Lower leg skin (tissue), 4 donors: ENCODE measurements at regions of chr14 and their contacts with region 1.

Region 1: GRCh38 chr14:54610051-54610977 is 43.4 kb downstream of the SAMD4A start:
- DNase-seq: no peak
- H3K4me3 ChIP-seq: no peak overlapping the region
- CTCF ChIP-seq: no peak
- POLR2A ChIP-seq: no peak

Region 2: GRCh38 chr14:54627540-54628363 is 17.4 kb after region 1 on chr14:
- intact Hi-C with region 1: no loop called
- DNase-seq: no peak
- H3K4me3 ChIP-seq: no peak overlapping the region
- CTCF ChIP-seq: no peak
- POLR2A ChIP-seq: no peak

Region 3: GRCh38 chr14:54654605-54655004 is 44.3 kb after region 1 on chr14:
- intact Hi-C with region 1: loop called (anchors 1 kb)
- DNase-seq: no peak
- H3K4me3 ChIP-seq: no peak overlapping the region
- CTCF ChIP-seq: no peak
- POLR2A ChIP-seq: no peak

Region 4: GRCh38 chr14:54922598-54922997 is 312.3 kb after region 1 on chr14:
- intact Hi-C with region 1: no loop called
- DNase-seq: no peak
- H3K4me3 ChIP-seq: no peak overlapping the region
- CTCF ChIP-seq: no peak
- POLR2A ChIP-seq: no peak